ENCODE measurements at regions of chr18 and their contacts with region 1.

Region 1: DNA sequence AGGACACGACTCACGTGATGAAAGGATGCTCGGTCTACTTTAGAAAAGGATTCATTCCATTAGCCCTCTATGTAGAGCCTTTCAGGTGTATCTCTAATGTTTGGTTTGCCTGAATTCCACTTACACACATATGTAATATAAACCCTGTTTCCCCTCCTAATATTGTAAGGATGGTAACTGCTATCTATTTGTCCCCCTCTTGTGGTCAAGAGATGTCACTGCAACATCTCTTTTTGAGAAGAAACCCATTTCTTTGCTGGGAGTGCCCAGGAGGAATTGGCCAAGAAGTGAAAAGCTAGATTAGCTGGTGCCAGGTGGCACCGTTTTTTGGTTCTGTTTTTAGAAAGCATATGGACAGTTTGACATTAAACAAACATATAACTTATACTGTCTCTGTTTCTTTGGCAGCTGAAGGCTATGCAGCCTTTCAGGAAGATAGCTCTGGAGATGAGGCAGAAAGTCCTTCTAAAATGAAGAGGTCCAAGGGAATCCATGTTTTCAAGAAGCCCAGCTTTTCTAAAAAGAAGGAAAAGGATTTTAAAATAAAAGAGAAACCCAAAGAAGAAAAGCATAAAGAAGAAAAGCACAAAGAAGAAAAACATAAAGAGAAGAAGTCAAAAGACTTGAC is 41.2 kb downstream of the RALBP1 start:
- DNase-seq: peak; percentile 65
- H3K4me3 ChIP-seq: no peak overlapping the region
- H3K27ac ChIP-seq: no peak overlapping the region
- H3K4me1 ChIP-seq: peaks cover 10% of the 10 kb centered on the region
- H3K27me3 ChIP-seq: no peaks in the 10 kb centered on the region
- CTCF ChIP-seq: peak; percentile 73 to 81
- POLR2A ChIP-seq: no peak

Region 2: GRCh38 chr18:9066817-9067306 is 449.7 kb before region 1 on chr18:
- CTCF ChIA-PET with region 1: interaction called, 66 read pairs
- POLR2A ChIA-PET with region 1: no interaction called
- dilution Hi-C with region 1: no loop called
- intact Hi-C with region 1: no loop called
- DNase-seq: no peak
- H3K4me3 ChIP-seq: no peak overlapping the region
- H3K27ac ChIP-seq: no peak overlapping the region
- H3K4me1 ChIP-seq: no peaks in the 10 kb centered on the region
- H3K27me3 ChIP-seq: no peaks in the 10 kb centered on the region
- CTCF ChIP-seq: no peak
- POLR2A ChIP-seq: no peak

Region 3: GRCh38 chr18:9147440-9148202 is 368.9 kb before region 1 on chr18:
- CTCF ChIA-PET with region 1: interaction called, 16 read pairs
- POLR2A ChIA-PET with region 1: no interaction called
- dilution Hi-C with region 1: no loop called
- intact Hi-C with region 1: no loop called
- DNase-seq: peak; percentile 79
- H3K4me3 ChIP-seq: no peak overlapping the region
- H3K27ac ChIP-seq: no peak overlapping the region
- H3K4me1 ChIP-seq: peaks cover 12% of the 10 kb centered on the region
- H3K27me3 ChIP-seq: no peaks in the 10 kb centered on the region
- CTCF ChIP-seq: peak; percentile 52 to 63
- POLR2A ChIP-seq: no peak

Region 4: DNA sequence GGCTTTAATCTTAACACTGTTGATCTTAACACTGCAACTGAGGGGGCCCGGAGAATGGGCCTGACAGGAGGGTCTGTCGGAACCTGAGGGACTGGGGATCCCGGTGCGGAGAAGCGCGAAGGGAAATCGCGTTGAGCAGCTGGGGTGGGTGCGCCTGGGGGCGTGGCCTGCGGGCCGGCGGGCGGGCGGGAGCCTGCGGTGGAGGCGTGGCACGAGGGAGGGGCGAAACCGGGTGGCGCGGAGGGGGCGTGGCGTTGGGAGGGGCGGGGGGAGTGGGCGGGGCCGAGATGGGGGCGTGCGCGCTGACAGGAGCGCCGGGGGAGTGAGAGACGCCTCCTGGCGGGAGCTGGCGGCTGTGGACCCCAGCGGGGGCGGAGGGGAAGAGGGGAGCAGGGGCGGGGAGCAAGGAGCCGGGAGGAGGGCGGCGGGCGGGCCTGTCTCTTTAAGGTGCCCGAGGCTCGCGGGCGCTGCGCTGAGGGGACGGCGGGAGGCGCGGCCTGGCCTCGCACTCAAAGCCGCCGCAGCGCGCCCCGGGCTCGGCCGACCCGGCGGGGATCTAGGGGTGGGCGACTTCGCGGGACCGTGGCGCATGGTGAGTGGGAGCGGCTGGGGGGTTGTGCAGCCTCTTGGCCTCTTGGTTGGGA is 182.1 kb before region 1 on chr18 and contains the start of gene TWSG1:
- CTCF ChIA-PET with region 1: interaction called, 27 read pairs
- POLR2A ChIA-PET with region 1: no interaction called
- dilution Hi-C with region 1: no loop called
- intact Hi-C with region 1: loop called (anchors 1 kb)
- DNase-seq: peak; percentile 93
- H3K4me3 ChIP-seq: peak within 1 kb of the TSS; percentile 77 to 88 (median 87)
- H3K27ac ChIP-seq: peak within 1 kb of the TSS; percentile 71
- H3K4me1 ChIP-seq: peaks cover 3% of the 10 kb centered on the region
- H3K27me3 ChIP-seq: no peaks in the 10 kb centered on the region
- CTCF ChIP-seq: peak in 1 of 2 donors; percentile 65
- POLR2A ChIP-seq: peak; percentile 65
- total RNA-seq, gene TWSG1: 57.4 and 69.6 TPM in 2 replicates

Region 5: DNA sequence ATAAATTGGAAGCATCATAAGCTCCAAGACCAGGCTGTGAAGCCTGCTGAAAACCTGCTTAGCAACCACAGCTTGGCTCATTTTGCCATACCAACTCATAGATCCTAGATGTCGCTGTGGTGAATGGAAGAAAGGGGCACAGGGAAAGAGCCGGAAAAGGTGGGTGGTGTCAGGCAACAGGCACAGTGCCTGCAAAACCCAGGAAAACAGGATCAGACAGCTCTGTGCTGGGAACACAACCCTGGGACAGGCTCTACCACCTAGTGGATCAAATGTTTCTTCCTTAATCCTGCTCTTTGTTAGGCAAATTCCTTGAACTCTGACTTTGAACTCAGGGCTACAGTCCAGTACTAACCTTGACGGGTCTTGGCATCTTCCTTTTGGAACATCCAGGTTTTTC is 150.4 kb before region 1 on chr18:
- CTCF ChIA-PET with region 1: interaction called, 62 read pairs
- POLR2A ChIA-PET with region 1: no interaction called
- dilution Hi-C with region 1: no loop called
- intact Hi-C with region 1: loop called (anchors 1 kb)
- DNase-seq: peak; percentile 79
- H3K4me3 ChIP-seq: no peak overlapping the region
- H3K27ac ChIP-seq: no peak overlapping the region
- H3K4me1 ChIP-seq: peaks cover 7% of the 10 kb centered on the region
- H3K27me3 ChIP-seq: no peaks in the 10 kb centered on the region
- CTCF ChIP-seq: peak; percentile 47 to 52
- POLR2A ChIP-seq: no peak

Region 6: GRCh38 chr18:9474983-9475642 is 41.4 kb before region 1 on chr18 and contains the start of gene RALBP1:
- CTCF ChIA-PET with region 1: interaction called, 19 read pairs
- POLR2A ChIA-PET with region 1: no interaction called
- dilution Hi-C with region 1: no loop called
- intact Hi-C with region 1: loop called (anchors 5 kb)
- DNase-seq: peak; percentile 100
- H3K4me3 ChIP-seq: peak within 1 kb of the TSS; percentile 90 to 100 (median 91)
- H3K27ac ChIP-seq: peak within 1 kb of the TSS; percentile 74
- H3K4me1 ChIP-seq: peaks cover 14% of the 10 kb centered on the region
- H3K27me3 ChIP-seq: no peaks in the 10 kb centered on the region
- CTCF ChIP-seq: peak in 1 of 2 donors; percentile 11
- POLR2A ChIP-seq: peak; percentile 93
- total RNA-seq, gene RALBP1: 63.5 and 68.4 TPM in 2 replicates